Mammary epithelial cell (primary cell): ENCODE measurements at regions of chr21 and their contacts with region 1.

Region 1: DNA sequence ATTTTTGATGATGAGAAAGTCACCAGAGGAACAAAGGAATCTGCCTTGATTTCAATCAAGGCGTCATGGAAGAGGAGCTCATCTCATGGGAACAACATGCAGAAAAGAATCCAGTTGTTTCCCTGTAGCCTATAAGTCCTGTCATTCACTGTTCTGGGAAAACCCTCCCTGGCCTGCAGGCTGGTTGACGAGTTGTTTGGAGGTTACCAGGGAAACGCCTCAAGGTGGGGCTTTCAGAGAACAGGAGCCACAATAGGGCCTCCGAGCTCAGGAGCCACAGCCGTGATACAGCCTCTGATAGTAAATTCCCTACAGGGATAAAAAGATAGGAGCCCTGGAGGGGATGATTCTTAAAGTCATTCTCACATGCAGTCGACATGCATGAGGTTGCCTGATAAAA is 135.2 kb downstream of the PSMG1 start:
- DNase-seq: peak; percentile 95
- H3K4me3 ChIP-seq: peak overlapping the region in 1 of 3 experiments; percentile 19
- H3K27ac ChIP-seq: peak overlapping the region; percentile 97
- H3K4me1 ChIP-seq: peaks cover 34% of the 10 kb centered on the region
- H3K27me3 ChIP-seq: no peaks in the 10 kb centered on the region
- CTCF ChIP-seq: no peak

Region 2: GRCh38 chr21:38831526-38832467 is 216.3 kb before region 1 on chr21:
- CTCF ChIA-PET with region 1: no interaction called
- dilution Hi-C with region 1: no loop called
- in situ Hi-C with region 1: no loop called
- intact Hi-C with region 1: loop called (anchors 5 kb)
- DNase-seq: peak; percentile 98
- H3K4me3 ChIP-seq: no peak overlapping the region
- H3K27ac ChIP-seq: peak overlapping the region; percentile 63
- H3K4me1 ChIP-seq: peaks cover 13% of the 10 kb centered on the region
- H3K27me3 ChIP-seq: no peaks in the 10 kb centered on the region
- CTCF ChIP-seq: no peak

Region 3: GRCh38 chr21:38913120-38913892 is 134.8 kb before region 1 on chr21:
- CTCF ChIA-PET with region 1: no interaction called
- dilution Hi-C with region 1: no loop called
- in situ Hi-C with region 1: no loop called
- intact Hi-C with region 1: loop called (anchors 2 kb)
- DNase-seq: peak; percentile 87
- H3K4me3 ChIP-seq: no peak overlapping the region
- H3K27ac ChIP-seq: peak overlapping the region; percentile 71
- H3K4me1 ChIP-seq: peaks cover 49% of the 10 kb centered on the region
- H3K27me3 ChIP-seq: no peaks in the 10 kb centered on the region
- CTCF ChIP-seq: no peak

Region 4: GRCh38 chr21:38993561-38993960 is 54.5 kb before region 1 on chr21:
- CTCF ChIA-PET with region 1: no interaction called
- dilution Hi-C with region 1: no loop called
- in situ Hi-C with region 1: no loop called
- intact Hi-C with region 1: loop called (anchors 1 kb)
- DNase-seq: peak; percentile 92
- H3K4me3 ChIP-seq: peak overlapping the region in 1 of 3 experiments; percentile 3
- H3K27ac ChIP-seq: peak overlapping the region; percentile 86
- H3K4me1 ChIP-seq: peaks cover 40% of the 10 kb centered on the region
- H3K27me3 ChIP-seq: no peaks in the 10 kb centered on the region
- CTCF ChIP-seq: no peak

Region 5: DNA sequence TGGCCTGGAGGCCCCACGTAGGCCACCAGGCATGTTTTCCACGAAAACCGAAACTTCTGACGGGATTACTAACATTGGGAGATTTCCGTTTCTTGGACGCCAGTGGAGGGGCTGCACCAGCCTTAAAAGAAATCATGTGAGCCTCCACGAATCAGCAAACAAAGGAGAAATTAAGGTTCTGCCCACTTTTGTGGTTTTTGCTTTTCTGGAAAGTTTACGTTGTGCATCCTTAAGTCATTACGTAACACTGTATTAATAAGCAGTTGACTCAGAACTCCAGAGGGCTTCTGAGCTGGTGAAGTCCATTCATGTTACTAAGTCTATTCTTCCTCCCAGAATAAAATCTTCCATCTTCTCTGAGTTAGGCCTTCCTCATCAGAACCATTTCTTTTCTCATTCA is 33.3 kb before region 1 on chr21:
- CTCF ChIA-PET with region 1: no interaction called
- dilution Hi-C with region 1: no loop called
- in situ Hi-C with region 1: no loop called
- intact Hi-C with region 1: loop called (anchors 1 kb)
- DNase-seq: peak; percentile 88
- H3K4me3 ChIP-seq: no peak overlapping the region
- H3K27ac ChIP-seq: peak overlapping the region; percentile 66
- H3K4me1 ChIP-seq: peaks cover 16% of the 10 kb centered on the region
- H3K27me3 ChIP-seq: no peaks in the 10 kb centered on the region
- CTCF ChIP-seq: no peak

Region 6: GRCh38 chr21:39033878-39034602 is 14.0 kb before region 1 on chr21:
- CTCF ChIA-PET with region 1: no interaction called
- dilution Hi-C with region 1: no loop called
- in situ Hi-C with region 1: no loop called
- intact Hi-C with region 1: loop called (anchors 1 kb)
- DNase-seq: no peak
- H3K4me3 ChIP-seq: no peak overlapping the region
- H3K27ac ChIP-seq: peak overlapping the region; percentile 8
- H3K4me1 ChIP-seq: peaks cover 28% of the 10 kb centered on the region
- H3K27me3 ChIP-seq: no peaks in the 10 kb centered on the region
- CTCF ChIP-seq: no peak